PC-9 (cell line): ENCODE measurements at regions of chr1 and their contacts with region 1.

Region 1: DNA sequence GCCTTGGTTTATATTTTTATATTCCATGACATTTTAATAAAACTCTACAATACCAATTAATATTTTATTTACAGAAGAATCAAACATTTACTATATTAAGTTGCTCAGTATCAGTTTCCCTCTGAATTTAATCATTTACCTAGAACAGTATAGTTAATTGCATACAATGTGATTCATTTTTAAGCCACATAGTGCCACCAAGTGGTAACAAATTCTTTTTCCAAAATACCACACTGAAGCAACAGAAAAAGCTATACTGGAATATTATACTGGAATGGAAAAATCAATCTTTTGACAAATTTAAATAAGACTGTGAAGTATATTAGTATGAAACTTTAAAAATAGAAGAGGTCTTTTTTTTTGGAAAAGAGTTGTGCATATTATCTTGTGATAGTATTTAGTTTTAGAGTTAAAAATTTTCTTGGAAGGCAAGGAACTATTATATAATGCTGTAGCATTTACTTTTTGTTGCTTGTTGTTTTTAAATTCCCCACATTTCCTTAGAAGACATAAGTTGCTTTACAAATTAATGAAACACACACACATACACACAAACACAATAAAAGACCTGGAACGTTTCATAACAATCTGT is 57.3 kb downstream of the ZNF644 start:
- DNase-seq: no peak
- H3K4me3 ChIP-seq: no peak overlapping the region
- H3K27ac ChIP-seq: peak overlapping the region; percentile 27; the same call in 1 of the 2 replicates
- H3K4me1 ChIP-seq: peaks cover 15% of the 10 kb centered on the region
- H3K27me3 ChIP-seq: no peaks in the 10 kb centered on the region
- CTCF ChIP-seq: peak; percentile 76

Region 2: GRCh38 chr1:90721210-90722194 is 243.0 kb before region 1 on chr1:
- CTCF ChIA-PET with region 1: interaction called, 12 read pairs
- POLR2A ChIA-PET with region 1: no interaction called
- intact Hi-C with region 1: loop called (anchors 2 kb)
- DNase-seq: peak; percentile 52 to 71
- H3K4me3 ChIP-seq: peak overlapping the region; percentile 20; the same call in 1 of the 2 replicates
- H3K27ac ChIP-seq: no peak overlapping the region
- H3K4me1 ChIP-seq: no peaks in the 10 kb centered on the region
- H3K27me3 ChIP-seq: no peaks in the 10 kb centered on the region
- CTCF ChIP-seq: peak; percentile 99

Region 3: DNA sequence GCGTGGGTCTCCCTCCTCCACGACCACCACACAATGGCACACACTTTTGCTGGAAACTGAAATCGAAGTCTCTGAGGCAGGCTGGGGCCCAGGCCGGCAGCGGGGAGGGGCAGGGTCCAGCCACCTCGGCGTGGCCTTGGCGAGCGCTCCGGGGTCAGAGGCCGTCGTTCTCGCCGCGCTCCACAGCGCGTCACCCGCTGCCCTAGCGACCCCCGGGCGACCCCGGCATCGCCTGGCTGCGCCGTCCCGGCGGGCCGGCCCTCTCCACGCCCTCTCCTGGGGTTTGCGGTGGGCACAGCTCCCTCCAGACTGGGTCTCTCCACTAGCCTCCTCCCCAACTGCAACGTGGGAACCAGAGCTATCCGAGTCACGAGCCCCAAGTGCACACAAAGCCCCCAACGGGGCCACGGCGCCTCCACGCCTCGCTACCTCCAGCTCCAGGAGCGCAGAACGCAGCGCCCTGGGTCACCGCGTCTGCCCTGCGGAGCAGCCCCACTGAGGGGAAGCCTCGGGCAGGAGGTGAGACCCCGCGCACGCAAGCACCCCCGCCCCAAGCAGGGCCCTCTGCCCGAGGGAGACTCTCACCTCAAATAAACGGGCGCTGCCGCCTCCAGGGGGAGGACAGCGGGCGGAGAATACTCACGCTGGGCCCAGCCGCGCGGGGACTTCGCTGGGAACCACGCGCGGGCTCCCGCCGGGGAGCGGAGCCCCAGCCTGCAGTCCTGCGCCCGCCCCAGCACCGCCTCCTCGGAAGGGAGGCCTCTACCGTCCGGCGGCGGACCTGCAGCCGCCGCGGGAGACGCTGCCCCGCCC is 113.4 kb before region 1 on chr1:
- CTCF ChIA-PET with region 1: no interaction called
- POLR2A ChIA-PET with region 1: interaction called, 10 read pairs
- intact Hi-C with region 1: no loop called
- DNase-seq: peak; percentile 69 to 75
- H3K4me3 ChIP-seq: peak overlapping the region; percentile 89
- H3K27ac ChIP-seq: no peak overlapping the region
- H3K4me1 ChIP-seq: peaks cover 9% of the 10 kb centered on the region; the same call in 1 of the 2 replicates
- H3K27me3 ChIP-seq: no peaks in the 10 kb centered on the region
- CTCF ChIP-seq: peak; percentile 74

Region 4: DNA sequence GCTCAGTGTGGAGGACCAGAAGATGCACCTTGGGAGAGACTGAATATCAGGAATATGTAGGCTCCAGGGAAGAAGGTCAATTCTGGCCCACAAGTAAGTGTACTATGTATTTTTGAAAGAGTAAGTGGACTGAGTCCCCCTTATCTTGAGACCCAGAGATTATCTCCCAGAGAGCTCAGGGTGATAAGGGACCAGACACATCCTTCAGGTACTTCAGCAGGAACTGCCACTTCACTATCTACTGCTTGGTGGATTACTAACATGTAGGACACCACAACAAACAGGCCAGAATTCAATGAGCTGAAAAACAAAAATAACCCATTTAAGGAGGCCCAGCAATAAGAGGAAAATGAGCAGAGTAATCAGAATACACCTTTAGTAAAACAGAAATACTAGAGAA is 61.9 kb before region 1 on chr1:
- CTCF ChIA-PET with region 1: no interaction called
- POLR2A ChIA-PET with region 1: no interaction called
- intact Hi-C with region 1: no loop called
- DNase-seq: no peak
- H3K4me3 ChIP-seq: no peak overlapping the region
- H3K27ac ChIP-seq: no peak overlapping the region
- H3K4me1 ChIP-seq: no peaks in the 10 kb centered on the region
- H3K27me3 ChIP-seq: no peaks in the 10 kb centered on the region
- CTCF ChIP-seq: no peak

Region 5: DNA sequence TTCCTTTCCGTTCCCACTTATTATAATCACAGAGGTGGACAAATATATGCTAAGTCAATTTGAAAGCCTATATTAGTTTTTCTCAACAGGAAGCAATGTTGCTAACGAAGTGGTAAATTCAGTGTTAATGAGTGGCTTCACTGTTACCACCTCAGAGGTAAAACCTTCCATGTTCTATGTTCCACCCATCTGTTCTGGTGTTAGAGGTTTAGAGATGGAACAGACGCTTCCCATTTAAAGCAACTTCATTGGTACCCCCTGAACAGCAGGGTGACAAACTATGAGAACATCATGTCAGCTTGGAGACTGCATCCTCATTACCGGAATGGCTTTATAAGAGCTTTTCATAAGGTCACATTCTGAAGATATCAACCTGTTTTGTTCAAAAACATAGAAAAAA is 20.6 kb before region 1 on chr1:
- CTCF ChIA-PET with region 1: no interaction called
- POLR2A ChIA-PET with region 1: no interaction called
- intact Hi-C with region 1: loop called (anchors 1 kb)
- DNase-seq: no peak
- H3K4me3 ChIP-seq: no peak overlapping the region
- H3K27ac ChIP-seq: no peak overlapping the region
- H3K4me1 ChIP-seq: no peaks in the 10 kb centered on the region
- H3K27me3 ChIP-seq: no peaks in the 10 kb centered on the region
- CTCF ChIP-seq: no peak

Region 6: GRCh38 chr1:91075233-91076135 is 110.9 kb after region 1 on chr1:
- CTCF ChIA-PET with region 1: no interaction called
- POLR2A ChIA-PET with region 1: no interaction called
- intact Hi-C with region 1: no loop called
- DNase-seq: no peak
- H3K4me3 ChIP-seq: no peak overlapping the region
- H3K27ac ChIP-seq: no peak overlapping the region
- H3K4me1 ChIP-seq: no peaks in the 10 kb centered on the region; the same call in 1 of the 2 replicates
- H3K27me3 ChIP-seq: no peaks in the 10 kb centered on the region
- CTCF ChIP-seq: no peak